Esophagus muscularis mucosa (tissue), 4 donors: ENCODE measurements at regions of chr5 and their contacts with region 1.

Region 1: GRCh38 chr5:134370871-134371833 is at the start of gene UBE2B:
- DNase-seq: peak; percentile 100
- H3K4me3 ChIP-seq: peak within 1 kb of the TSS; percentile 82 to 99 (median 98)
- H3K27ac ChIP-seq: peak within 1 kb of the TSS; percentile 98 to 99 (median 98)
- H3K4me1 ChIP-seq: peaks cover 7 to 59% (median 55%) of the 10 kb centered on the region in 4 donors
- H3K27me3 ChIP-seq: no peaks in the 10 kb centered on the region
- CTCF ChIP-seq: peak in 1 of 3 experiments; percentile 7
- EP300 ChIP-seq: peak; percentile 0
- POLR2A ChIP-seq: peak; percentile 48
- total RNA-seq, gene UBE2B: 38.2 to 96.3 (median 52.3) TPM

Region 2: GRCh38 chr5:134225618-134226440 is 145.3 kb before region 1 on chr5 and contains the start of gene PPP2CA:
- intact Hi-C with region 1: loop called (anchors 5 kb)
- DNase-seq: peak; percentile 100
- H3K4me3 ChIP-seq: peak within 1 kb of the TSS; percentile 85 to 100 (median 98)
- H3K27ac ChIP-seq: peak within 1 kb of the TSS; percentile 100
- H3K4me1 ChIP-seq: peaks cover 32 to 52% (median 51%) of the 10 kb centered on the region in 4 donors
- H3K27me3 ChIP-seq: no peaks in the 10 kb centered on the region
- CTCF ChIP-seq: peak in 1 of 3 experiments; percentile 23
- EP300 ChIP-seq: no peak
- POLR2A ChIP-seq: peak; percentile 92
- total RNA-seq, gene PPP2CA: 89.0 to 142 (median 115) TPM

Region 3: DNA sequence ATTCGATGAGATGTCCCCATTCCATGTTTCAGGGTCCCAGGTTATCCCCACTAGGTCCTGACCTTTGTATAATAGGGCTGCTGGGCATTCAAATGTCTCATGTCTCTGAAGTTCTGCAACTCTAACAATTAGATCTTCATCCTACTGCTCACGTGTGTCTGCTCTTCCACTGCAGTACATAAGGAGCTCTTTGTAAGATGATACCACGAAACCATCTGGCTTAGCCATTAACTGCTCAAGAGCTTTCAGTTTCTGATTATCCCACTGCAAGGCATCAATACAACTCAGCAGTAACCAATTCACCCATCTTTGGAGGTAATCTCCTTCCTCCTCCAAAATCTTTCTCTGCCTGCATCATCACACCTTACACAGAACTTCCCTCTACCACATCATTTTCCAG is 95.3 kb before region 1 on chr5:
- intact Hi-C with region 1: no loop called
- DNase-seq: no peak
- H3K4me3 ChIP-seq: no peak overlapping the region
- H3K27ac ChIP-seq: no peak overlapping the region
- H3K4me1 ChIP-seq: no peaks in the 10 kb centered on the region
- H3K27me3 ChIP-seq: no peaks in the 10 kb centered on the region
- CTCF ChIP-seq: no peak
- EP300 ChIP-seq: no peak
- POLR2A ChIP-seq: no peak

Region 4: DNA sequence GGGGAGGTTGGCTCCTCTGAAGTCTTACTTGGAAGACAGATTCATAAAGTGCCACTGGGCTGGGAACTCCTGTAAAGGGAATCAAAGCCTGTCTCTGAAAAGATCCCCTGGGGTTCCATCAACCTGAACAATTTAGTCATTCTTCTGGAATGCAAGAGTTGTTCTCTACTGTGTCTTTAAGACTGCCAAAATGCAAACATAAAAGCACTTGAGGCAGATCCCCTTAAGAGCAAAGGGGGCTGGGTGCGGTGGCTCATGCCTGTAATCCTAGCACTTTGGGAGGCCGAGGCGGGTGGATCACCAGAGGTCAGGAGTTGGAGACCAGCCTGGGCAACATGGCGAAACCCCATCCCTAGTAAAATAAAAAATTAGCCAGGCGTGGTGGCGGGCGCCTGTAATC is 23.8 kb after region 1 on chr5:
- intact Hi-C with region 1: no loop called
- DNase-seq: no peak
- H3K4me3 ChIP-seq: no peak overlapping the region
- H3K27ac ChIP-seq: no peak overlapping the region
- H3K4me1 ChIP-seq: no peaks in the 10 kb centered on the region
- H3K27me3 ChIP-seq: no peaks in the 10 kb centered on the region
- CTCF ChIP-seq: no peak
- EP300 ChIP-seq: no peak
- POLR2A ChIP-seq: no peak

Region 5: GRCh38 chr5:134411546-134412266 is 40.6 kb after region 1 on chr5 and contains the start of gene CDKN2AIPNL:
- intact Hi-C with region 1: loop called (anchors 5 kb)
- DNase-seq: peak; percentile 96
- H3K4me3 ChIP-seq: peak within 1 kb of the TSS; percentile 71 to 84 (median 82)
- H3K27ac ChIP-seq: peak within 1 kb of the TSS; percentile 82 to 87 (median 85)
- H3K4me1 ChIP-seq: peaks cover 22 to 43% (median 38%) of the 10 kb centered on the region in 4 donors
- H3K27me3 ChIP-seq: no peaks in the 10 kb centered on the region
- CTCF ChIP-seq: peak; percentile 85 to 87 (median 87)
- EP300 ChIP-seq: no peak
- POLR2A ChIP-seq: peak; percentile 40
- total RNA-seq, gene CDKN2AIPNL: 17.9 to 19.9 (median 18.8) TPM

Region 6: DNA sequence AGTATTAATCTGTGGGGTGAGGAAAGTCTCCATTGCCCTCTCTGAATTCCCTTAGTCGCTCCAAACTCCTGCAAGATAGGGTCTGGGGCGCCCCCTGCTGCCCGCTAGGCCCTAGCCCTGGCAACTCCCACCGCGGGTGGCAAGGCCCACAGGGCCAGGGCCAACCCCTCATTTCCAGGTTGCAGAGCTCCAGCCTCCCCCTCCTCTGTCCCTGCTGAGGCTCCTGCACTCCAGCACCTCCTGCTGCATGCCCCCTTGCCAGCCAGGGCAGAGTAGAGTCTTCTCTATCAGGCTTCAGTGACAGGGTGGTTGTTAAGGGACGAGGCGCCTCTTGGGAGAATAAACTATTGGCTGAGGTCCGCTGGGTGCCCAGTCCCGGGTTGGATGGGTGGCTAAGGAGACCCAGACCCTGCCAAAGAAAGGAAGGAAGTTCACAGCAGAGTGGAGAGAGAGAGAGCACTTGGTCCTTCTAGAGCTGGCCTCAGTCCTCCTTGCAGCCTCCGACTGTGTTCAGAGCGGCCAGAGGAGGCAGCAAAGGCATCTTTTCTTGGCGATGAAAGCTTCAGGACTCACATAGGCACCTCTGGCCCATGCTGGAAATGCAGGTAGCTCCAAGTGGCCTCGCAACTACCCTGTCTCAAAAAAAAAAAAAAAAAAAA is 215.8 kb after region 1 on chr5:
- intact Hi-C with region 1: loop called (anchors 10 kb)
- DNase-seq: no peak
- H3K4me3 ChIP-seq: peak overlapping the region in 1 of 4 donors; percentile 16
- H3K27ac ChIP-seq: peak overlapping the region in 2 of 4 donors; percentile 8 to 16
- H3K4me1 ChIP-seq: peaks cover 20 to 23% (median 21%) of the 10 kb centered on the region in 4 donors
- H3K27me3 ChIP-seq: no peaks in the 10 kb centered on the region
- CTCF ChIP-seq: peak; percentile 74 to 85 (median 76)
- EP300 ChIP-seq: no peak
- POLR2A ChIP-seq: no peak

Region 7: DNA sequence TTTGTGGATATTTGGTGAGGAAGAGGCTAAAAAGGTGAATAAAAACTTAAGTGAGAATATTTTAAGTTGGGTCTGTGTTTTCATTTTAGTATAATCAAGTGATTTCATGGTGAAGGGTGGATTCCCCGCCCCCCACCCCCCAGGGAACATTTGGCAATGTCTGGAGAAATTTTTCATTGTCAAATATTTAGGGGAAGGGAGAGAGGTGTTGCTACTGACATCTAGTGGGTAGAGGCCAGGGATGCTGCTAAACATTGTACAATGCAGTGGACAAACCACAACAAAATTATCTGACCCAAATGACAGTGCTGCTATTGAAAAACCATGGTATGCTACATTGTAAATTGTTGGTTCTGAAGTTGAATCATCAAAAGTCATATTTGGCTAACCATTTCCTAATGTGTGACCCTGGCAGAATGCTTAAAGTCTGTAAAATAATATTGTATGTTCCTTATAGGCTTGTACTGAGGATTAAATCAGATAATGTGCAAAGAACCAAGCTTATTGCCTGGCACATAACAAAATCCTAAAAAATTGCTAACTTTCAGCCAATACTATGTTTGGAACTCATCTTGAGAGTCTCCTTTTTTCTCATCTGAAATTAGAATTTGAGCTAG is 480.3 kb after region 1 on chr5:
- intact Hi-C with region 1: no loop called
- DNase-seq: no peak
- H3K4me3 ChIP-seq: no peak overlapping the region
- H3K27ac ChIP-seq: peak overlapping the region in 3 of 4 donors; percentile 37 to 48 (median 42)
- H3K4me1 ChIP-seq: peaks cover 44 to 72% (median 66%) of the 10 kb centered on the region in 4 donors
- H3K27me3 ChIP-seq: no peaks in the 10 kb centered on the region
- CTCF ChIP-seq: peak; percentile 16 to 46 (median 37)
- EP300 ChIP-seq: no peak
- POLR2A ChIP-seq: no peak